HepG2 (cell line): ENCODE measurements at regions of chr3 and their contacts with region 1.

Region 1: GRCh38 chr3:69691860-69692259 is 47.4 kb upstream of the MITF start:
- DNase-seq: no peak
- ATAC-seq: no peak
- H3K4me3 ChIP-seq: no peak overlapping the region
- H3K27ac ChIP-seq: no peak overlapping the region
- H3K4me1 ChIP-seq: no peaks in the 10 kb centered on the region
- H3K27me3 ChIP-seq: no peaks in the 10 kb centered on the region
- CTCF ChIP-seq: no peak
- EP300 ChIP-seq: no peak
- POLR2A ChIP-seq: no peak
- RAD21 ChIP-seq: no peak

Region 2: GRCh38 chr3:69735893-69736292 is 44.0 kb after region 1 on chr3:
- CTCF ChIA-PET with region 1: no interaction called
- POLR2A ChIA-PET with region 1: no interaction called
- in situ Hi-C with region 1: no loop called
- intact Hi-C with region 1: no loop called
- DNase-seq: no peak
- ATAC-seq: no peak
- H3K4me3 ChIP-seq: no peak overlapping the region
- H3K27ac ChIP-seq: no peak overlapping the region
- H3K4me1 ChIP-seq: peaks cover 17% of the 10 kb centered on the region
- H3K27me3 ChIP-seq: peaks cover 0 to 11% of the 10 kb centered on the region in 2 experiments; a peak in 3 of 5 replicates
- CTCF ChIP-seq: no peak
- EP300 ChIP-seq: no peak
- POLR2A ChIP-seq: no peak
- RAD21 ChIP-seq: no peak

Region 3: GRCh38 chr3:69747511-69748258 is 55.8 kb after region 1 on chr3:
- CTCF ChIA-PET with region 1: no interaction called
- POLR2A ChIA-PET with region 1: no interaction called
- in situ Hi-C with region 1: no loop called
- intact Hi-C with region 1: no loop called
- DNase-seq: no peak
- ATAC-seq: no peak
- H3K4me3 ChIP-seq: no peak overlapping the region
- H3K27ac ChIP-seq: no peak overlapping the region
- H3K4me1 ChIP-seq: no peaks in the 10 kb centered on the region
- H3K27me3 ChIP-seq: no peaks in the 10 kb centered on the region; a peak in 1 of 5 replicates
- CTCF ChIP-seq: no peak
- EP300 ChIP-seq: no peak
- POLR2A ChIP-seq: no peak
- RAD21 ChIP-seq: no peak

Region 4: GRCh38 chr3:69855436-69856162 is 163.7 kb after region 1 on chr3:
- CTCF ChIA-PET with region 1: no interaction called
- POLR2A ChIA-PET with region 1: no interaction called
- in situ Hi-C with region 1: no loop called
- intact Hi-C with region 1: loop called (anchors 2 kb)
- DNase-seq: no peak
- ATAC-seq: no peak
- H3K4me3 ChIP-seq: no peak overlapping the region
- H3K27ac ChIP-seq: no peak overlapping the region
- H3K4me1 ChIP-seq: no peaks in the 10 kb centered on the region
- H3K27me3 ChIP-seq: no peaks in the 10 kb centered on the region
- CTCF ChIP-seq: no peak
- EP300 ChIP-seq: no peak
- POLR2A ChIP-seq: no peak
- RAD21 ChIP-seq: no peak

Region 5: DNA sequence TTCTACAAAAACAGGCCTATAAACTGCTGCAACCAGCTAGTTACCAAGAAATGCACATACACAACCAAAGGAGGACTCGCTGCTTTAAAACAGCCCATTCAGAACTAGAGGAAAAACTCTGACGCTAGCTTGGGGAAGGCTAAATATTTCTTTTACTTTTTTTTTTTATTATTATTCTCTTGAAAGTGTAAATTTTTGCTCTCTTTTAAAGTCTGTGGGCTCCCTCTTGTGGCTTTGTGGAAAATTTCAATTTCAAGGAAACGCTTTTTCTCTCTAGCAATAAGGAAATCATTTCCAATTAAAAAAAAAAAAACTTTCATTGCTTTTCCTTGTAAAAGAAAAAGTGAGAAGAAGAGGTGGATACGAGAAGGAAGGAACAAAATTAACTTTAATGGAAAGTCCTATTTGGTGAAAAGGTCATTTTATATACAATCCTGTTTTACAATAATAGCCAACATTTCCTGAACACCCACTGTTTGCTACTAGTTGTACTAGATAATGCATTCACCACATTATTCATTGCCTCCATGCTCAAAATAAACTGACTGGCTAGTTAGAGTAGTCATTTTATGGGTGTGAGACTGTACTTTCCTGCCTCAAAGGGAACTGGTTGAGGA is 256.5 kb after region 1 on chr3:
- CTCF ChIA-PET with region 1: interaction called, 4 read pairs
- POLR2A ChIA-PET with region 1: no interaction called
- in situ Hi-C with region 1: loop called (anchors 10 kb)
- intact Hi-C with region 1: loop called (anchors 5 kb)
- DNase-seq: peak; percentile 4
- ATAC-seq: no peak
- H3K4me3 ChIP-seq: no peak overlapping the region
- H3K27ac ChIP-seq: no peak overlapping the region
- H3K4me1 ChIP-seq: no peaks in the 10 kb centered on the region
- H3K27me3 ChIP-seq: no peaks in the 10 kb centered on the region; a peak in 1 of 5 replicates
- CTCF ChIP-seq: peak; percentile 20; the same call in 1 of the 2 replicates
- EP300 ChIP-seq: no peak
- POLR2A ChIP-seq: no peak
- RAD21 ChIP-seq: no peak

Region 6: DNA sequence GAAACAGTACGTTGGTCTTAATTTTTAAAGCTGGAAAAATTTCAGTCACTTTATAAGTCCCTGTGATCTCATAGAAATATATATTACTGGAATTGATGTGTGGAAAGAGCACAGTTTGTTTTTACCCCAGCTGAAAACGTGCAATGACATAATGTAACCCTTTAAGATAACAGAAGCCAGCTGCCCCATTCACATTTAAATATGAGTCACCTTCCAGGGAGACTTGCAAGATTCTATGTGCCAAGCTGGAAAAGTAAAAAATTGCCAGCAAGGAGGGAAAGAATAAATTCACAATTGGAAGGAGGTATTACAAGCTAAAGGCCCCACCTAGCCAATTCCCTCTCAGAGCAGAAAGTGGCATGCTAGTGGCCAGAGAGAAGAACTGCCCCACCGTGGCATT is 357.9 kb after region 1 on chr3:
- CTCF ChIA-PET with region 1: no interaction called
- POLR2A ChIA-PET with region 1: no interaction called
- in situ Hi-C with region 1: no loop called
- intact Hi-C with region 1: no loop called
- DNase-seq: no peak
- ATAC-seq: no peak
- H3K4me3 ChIP-seq: no peak overlapping the region
- H3K27ac ChIP-seq: no peak overlapping the region
- H3K4me1 ChIP-seq: no peaks in the 10 kb centered on the region
- H3K27me3 ChIP-seq: no peaks in the 10 kb centered on the region
- CTCF ChIP-seq: no peak
- EP300 ChIP-seq: no peak
- POLR2A ChIP-seq: no peak
- RAD21 ChIP-seq: no peak

Region 7: GRCh38 chr3:70342149-70342548 is 650.3 kb after region 1 on chr3:
- CTCF ChIA-PET with region 1: no interaction called
- POLR2A ChIA-PET with region 1: no interaction called
- in situ Hi-C with region 1: no loop called
- intact Hi-C with region 1: no loop called
- DNase-seq: no peak
- ATAC-seq: no peak
- H3K4me3 ChIP-seq: no peak overlapping the region
- H3K27ac ChIP-seq: no peak overlapping the region
- H3K4me1 ChIP-seq: no peaks in the 10 kb centered on the region
- H3K27me3 ChIP-seq: no peaks in the 10 kb centered on the region
- CTCF ChIP-seq: no peak
- EP300 ChIP-seq: no peak
- POLR2A ChIP-seq: no peak
- RAD21 ChIP-seq: no peak